Posterior cingulate gyrus (tissue), 11 donors: ENCODE measurements at regions of chr22 and their contacts with region 1.

Region 1: GRCh38 chr22:31272522-31273446 is 19.5 kb downstream of the PIK3IP1 start:
- DNase-seq: peak in 4 of 10 donors; percentile 54 to 72 (median 66)

Region 2: DNA sequence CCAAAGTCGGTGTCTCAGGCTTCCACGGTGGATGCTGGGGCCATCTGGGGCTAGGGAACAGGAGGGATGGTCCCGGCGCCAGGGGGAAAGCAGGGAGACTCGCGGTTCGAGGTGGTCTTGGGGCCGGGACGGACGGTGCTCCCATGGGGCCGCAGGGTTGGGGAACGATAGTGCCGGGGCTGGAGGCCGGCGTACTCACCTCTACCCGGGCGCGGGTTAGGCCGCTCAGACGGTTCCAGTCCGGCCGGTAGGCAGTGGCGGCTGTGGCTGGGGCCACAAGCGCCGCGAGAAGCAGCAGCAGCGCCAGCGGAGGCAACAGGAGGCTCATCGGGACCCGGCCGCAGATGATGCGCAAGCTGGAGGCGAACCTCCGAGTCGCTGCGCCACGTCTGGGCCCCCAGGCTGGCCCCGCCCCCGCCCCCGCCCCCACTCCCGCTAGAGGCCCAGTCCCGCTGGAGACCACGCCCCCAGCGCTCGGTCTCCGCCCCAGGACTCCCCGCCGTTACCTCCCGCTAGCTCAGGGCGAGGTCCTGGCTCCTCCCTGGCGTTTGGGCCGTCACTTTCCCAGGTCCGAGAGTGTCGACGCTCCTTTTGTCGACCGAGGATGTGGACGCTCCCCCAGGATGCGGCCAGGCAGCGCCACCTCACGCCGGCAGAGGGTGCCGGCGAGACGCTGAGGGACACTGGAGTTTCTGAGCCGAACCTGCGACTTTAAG is 165.4 kb before region 1 on chr22 and contains the start of gene SELENOM:
- intact Hi-C with region 1: loop called (anchors 5 kb)
- DNase-seq: peak; percentile 82 to 99 (median 94)

Region 3: DNA sequence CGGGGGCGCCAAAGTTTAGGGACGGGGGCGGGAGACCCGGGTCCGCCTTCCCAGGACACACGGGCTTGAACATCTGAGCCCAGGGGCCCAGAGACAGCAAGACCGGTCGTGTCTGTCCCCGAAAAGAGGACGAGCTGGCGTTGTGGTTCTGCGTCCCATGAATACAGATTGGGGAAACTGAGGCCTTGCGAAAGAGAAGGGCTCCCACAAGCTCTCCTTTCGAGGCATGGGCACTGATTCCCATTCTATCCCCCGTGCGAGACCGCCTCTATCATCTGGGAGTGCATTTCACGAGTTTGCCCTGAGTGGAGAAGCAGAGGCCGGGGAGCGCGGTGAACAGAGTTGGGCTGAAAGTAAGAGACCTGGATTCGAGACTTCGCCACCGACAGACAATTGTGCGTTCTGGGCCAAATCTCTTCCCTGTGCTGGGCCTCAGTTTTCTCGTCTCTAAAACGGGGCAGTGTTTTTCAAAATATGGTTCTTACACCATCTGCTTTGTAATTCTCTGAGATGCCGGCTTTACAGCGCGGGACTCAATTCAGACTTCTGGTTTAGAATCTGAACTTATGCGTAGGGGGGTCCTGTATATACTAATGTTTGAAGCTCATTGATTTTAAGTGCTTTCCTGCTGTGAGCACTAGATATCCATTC is 112.3 kb before region 1 on chr22:
- intact Hi-C with region 1: no loop called
- DNase-seq: peak in 7 of 10 donors; percentile 13 to 89 (median 25)

Region 4: DNA sequence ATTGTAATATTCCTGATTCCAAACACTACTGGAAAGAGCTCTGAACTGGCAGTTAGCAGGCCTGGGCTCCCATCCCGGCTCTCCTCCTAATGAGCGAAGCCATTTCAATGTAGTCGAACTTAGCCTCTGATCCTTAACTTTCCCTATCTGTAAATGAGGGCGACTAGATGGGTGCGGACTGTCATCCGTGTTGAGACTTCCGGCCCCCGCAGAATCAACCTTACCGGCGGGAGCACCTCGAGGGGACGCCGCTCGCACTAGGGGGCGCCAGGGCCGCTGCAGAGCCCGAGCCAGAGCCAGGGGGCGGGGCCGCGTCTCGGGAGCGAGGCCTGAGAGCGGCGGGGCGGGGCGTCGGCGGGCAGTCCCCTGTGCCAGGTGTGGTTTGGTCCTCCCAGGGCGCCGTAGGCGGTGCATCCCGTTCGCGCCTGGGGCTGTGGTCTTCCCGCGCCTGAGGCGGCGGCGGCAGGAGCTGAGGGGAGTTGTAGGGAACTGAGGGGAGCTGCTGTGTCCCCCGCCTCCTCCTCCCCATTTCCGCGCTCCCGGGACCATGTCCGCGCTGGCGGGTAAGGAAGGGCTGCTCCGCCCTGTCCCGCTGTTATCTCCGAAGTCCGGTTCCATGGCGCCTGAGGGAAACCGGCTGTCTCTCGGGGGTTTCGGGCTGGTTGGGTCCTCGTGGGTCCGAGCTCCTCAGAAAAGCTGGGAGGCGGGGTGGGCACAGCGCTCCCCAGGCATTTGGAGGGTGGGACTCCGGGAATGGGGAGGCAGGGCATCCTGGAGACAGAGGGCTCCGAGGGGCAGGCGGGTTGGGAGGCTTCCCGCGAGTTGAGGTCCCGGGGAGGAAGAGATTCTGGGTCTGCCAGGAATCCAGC is 60.7 kb before region 1 on chr22 and contains the start of gene LIMK2:
- intact Hi-C with region 1: loop called (anchors 5 kb)
- DNase-seq: peak; percentile 81 to 99 (median 92)